Left ventricle myocardium superior (tissue), 1 donor: ENCODE measurements at regions of chr11 and their contacts with region 1.

Region 1: GRCh38 chr11:123011510-123011909 is 29.9 kb upstream of the BSX start:
- DNase-seq: no peak
- ATAC-seq: no peak

Region 2: GRCh38 chr11:122733318-122733717 is 278.2 kb before region 1 on chr11:
- intact Hi-C with region 1: no loop called
- DNase-seq: peak; percentile 48
- ATAC-seq: peak; percentile 26

Region 3: DNA sequence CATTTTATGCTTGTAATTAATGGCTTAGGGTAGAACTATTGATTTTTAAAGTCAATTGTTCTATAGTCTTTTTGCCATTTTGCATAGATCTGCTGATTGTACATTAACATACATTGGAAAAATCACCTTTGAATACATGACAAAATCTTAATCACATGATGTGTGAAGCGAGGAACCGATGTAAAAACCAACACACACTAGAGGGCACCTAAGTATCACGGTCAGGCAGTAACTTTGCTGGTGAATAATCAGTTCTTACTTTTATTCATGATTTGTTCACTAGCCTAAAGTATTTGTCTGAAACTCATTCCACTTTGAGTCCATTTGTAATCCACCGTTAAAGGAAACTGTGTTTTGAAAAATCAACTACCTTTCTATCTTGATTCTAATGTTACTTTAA is 100.7 kb before region 1 on chr11:
- intact Hi-C with region 1: loop called (anchors 10 kb)
- DNase-seq: no peak
- ATAC-seq: no peak